Activated B cell treated with CpG ODN at 0.5 μM for 24 hours (primary cell): ENCODE measurements at regions of chr7 and their contacts with region 1.

Region 1: GRCh38 chr7:120842121-120842621 is 15.8 kb downstream of the TSPAN12 start:
- DNase-seq: no peak
- ATAC-seq: no peak
- H3K4me3 Mint-ChIP-seq: no peak overlapping the region
- H3K27ac Mint-ChIP-seq: no peak overlapping the region
- H3K4me1 Mint-ChIP-seq: peaks cover 2% of the 10 kb centered on the region
- H3K27me3 Mint-ChIP-seq: no peaks in the 10 kb centered on the region
- CTCF ChIP-seq: no peak

Region 2: DNA sequence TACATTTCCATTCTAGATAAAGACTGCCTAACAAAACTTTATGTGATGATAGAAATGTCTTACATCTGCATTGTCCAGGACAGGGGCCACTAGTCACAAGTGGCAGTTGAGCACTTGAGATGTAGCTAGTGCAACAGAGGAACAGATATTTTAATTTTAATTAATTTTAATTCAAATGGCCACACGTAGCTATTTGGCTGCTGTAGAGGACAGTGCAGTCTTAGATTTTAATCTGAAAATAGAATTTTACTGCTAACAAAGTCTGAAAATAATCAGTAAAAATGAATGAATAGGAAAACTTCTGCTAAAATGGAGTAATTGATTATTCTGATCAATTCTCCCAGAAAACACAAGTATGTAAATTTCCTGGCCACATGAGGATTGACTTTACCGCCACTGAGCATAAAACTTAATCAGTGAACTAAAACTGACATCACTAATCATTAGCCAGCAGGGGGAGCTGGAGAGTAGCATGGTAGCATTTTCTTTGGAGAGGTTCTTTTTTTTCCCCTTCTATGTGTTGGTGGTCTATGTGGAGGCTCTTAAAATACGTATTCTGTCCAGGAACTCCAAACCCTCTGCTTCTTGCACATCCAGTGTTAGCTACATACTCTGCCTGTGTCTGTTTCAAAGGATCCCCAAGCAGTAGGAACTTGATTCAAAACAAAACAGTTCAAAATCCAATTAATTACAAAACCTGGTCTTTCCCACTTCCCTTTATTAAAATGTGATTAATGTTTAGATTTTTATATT is 36.4 kb before region 1 on chr7:
- CTCF ChIA-PET with region 1: no interaction called
- POLR2A ChIA-PET with region 1: no interaction called
- intact Hi-C with region 1: no loop called
- DNase-seq: no peak
- ATAC-seq: peak; percentile 69
- H3K4me3 Mint-ChIP-seq: no peak overlapping the region
- H3K27ac Mint-ChIP-seq: no peak overlapping the region
- H3K4me1 Mint-ChIP-seq: no peaks in the 10 kb centered on the region
- H3K27me3 Mint-ChIP-seq: peaks cover 7% of the 10 kb centered on the region
- CTCF ChIP-seq: peak; percentile 63

Region 3: DNA sequence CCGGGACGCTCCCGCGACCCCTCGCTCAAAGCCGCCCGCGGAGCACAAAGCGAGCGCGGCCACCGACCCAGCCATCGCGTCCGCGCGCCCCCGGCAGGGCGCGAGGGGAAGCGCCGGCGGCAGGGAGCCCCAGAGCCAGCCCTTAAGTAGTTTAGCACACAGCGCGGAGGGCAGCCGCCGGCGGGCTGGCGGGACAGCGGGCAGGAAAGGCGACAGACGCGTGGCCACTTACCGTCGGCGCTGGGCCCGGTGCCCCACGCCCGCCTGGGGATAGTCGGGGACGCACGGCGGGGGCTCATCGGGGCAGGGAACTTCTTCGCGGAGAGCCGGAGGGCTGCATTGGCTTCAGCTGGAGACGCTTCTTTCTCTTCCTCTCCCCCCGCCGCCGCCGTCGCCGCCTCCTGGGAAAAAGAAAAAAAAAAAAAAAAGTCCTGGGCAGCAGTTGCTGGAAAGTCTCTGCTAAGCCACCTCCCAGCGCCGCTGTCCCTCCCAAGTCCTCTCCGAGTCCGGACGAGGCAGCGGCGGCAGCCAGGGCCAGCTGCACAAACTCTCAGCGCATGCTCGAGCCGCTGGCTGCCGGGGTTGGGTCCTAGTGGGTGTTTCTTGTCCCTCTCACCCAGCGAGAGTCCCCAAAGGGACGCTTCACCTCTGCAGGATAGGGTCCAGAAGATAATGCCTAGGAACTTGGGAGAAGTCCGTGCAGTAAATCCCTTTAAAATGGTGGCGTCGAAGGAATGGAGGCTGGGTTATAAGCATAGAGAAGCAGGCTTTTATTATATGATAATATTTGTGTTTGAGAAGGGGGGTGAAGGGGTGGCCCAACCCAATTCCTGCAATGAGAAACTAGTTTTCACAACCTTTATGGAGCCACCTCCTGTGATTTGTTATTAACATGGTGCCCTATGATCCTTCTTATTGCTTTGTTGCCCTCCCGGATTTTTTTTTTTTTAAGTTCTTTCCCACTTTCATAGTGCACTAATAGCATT is 15.7 kb after region 1 on chr7 and contains the start of gene TSPAN12:
- CTCF ChIA-PET with region 1: no interaction called
- POLR2A ChIA-PET with region 1: no interaction called
- intact Hi-C with region 1: loop called (anchors 1 kb)
- DNase-seq: peak; percentile 54
- ATAC-seq: peak; percentile 87
- H3K4me3 Mint-ChIP-seq: peak within 1 kb of the TSS; percentile 90
- H3K27ac Mint-ChIP-seq: no peak within 1 kb of the TSS
- H3K4me1 Mint-ChIP-seq: peaks cover 14% of the 10 kb centered on the region
- H3K27me3 Mint-ChIP-seq: peaks cover 59% of the 10 kb centered on the region
- CTCF ChIP-seq: no peak
- total RNA-seq, gene TSPAN12: not detected in 2 replicates